Activated CD4-positive, alpha-beta T cell treated with anti-CD3 and anti-CD28 coated beads, Interleukin-2, amount 10 ng/mL, durations not matched to agents 24 days and 14 days (primary cell): ENCODE measurements at regions of chr6 and their contacts with region 1.

Region 1: DNA sequence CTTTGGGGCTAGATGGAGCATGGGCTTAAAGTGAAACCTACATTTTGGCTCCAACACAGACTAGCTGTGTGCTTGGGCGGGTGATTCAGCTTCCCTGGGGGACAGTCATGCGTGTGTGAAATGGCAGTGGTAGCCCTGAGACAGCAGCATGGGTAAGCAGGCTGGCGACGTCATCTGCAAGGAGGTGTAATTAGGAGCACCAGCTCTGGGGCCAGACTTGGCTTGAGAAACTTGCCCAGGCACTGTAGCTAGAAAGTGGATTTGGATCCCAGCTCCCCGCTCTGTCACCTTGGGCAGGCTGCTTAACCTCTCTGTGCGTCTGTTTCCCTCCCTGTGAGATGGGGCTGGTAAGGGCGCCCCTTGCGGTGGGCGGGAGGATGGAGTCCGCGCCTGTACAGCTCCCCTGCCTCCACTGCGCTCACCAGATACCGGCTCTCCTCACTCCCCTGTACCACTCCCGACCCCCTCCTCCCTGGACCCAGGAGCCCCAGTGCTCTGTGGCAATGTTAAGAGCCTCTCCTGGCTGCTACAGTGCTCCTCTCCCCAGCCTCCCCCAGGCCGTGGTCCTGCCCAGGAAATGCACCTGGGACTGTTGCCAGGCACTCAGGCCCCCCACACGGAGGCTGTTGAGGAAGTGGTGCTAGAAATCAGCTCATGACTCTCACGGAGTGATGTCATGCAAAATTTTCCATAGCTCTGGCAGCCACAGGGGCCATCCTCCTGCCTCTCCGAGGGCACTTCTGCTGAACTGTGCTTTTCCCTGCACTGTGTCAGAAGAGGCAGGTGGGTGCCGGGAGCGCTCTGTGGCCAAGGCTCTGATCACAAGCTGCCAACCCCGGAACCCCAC is 44.6 kb downstream of the SYNJ2 start:
- DNase-seq: peak; percentile 92
- H3K4me3 Mint-ChIP-seq: peak overlapping the region; percentile 78
- H3K27ac Mint-ChIP-seq: peak overlapping the region; percentile 100
- H3K4me1 Mint-ChIP-seq: peaks cover 34% of the 10 kb centered on the region
- H3K27me3 Mint-ChIP-seq: no peaks in the 10 kb centered on the region

Region 2: GRCh38 chr6:157756708-157757429 is 269.4 kb before region 1 on chr6:
- intact Hi-C with region 1: no loop called
- DNase-seq: peak; percentile 92
- H3K4me3 Mint-ChIP-seq: peak overlapping the region; percentile 58
- H3K27ac Mint-ChIP-seq: peak overlapping the region; percentile 96
- H3K4me1 Mint-ChIP-seq: peaks cover 82% of the 10 kb centered on the region
- H3K27me3 Mint-ChIP-seq: peaks cover 11% of the 10 kb centered on the region

Region 3: GRCh38 chr6:157941101-157941863 is 85.0 kb before region 1 on chr6:
- intact Hi-C with region 1: loop called (anchors 2 kb)
- DNase-seq: peak; percentile 52
- H3K4me3 Mint-ChIP-seq: no peak overlapping the region
- H3K27ac Mint-ChIP-seq: no peak overlapping the region
- H3K4me1 Mint-ChIP-seq: peaks cover 25% of the 10 kb centered on the region
- H3K27me3 Mint-ChIP-seq: no peaks in the 10 kb centered on the region

Region 4: GRCh38 chr6:157981395-157982296 is 44.6 kb before region 1 on chr6 and contains the start of gene SYNJ2:
- intact Hi-C with region 1: loop called (anchors 1 kb)
- DNase-seq: peak; percentile 96
- H3K4me3 Mint-ChIP-seq: peak within 1 kb of the TSS; percentile 73
- H3K27ac Mint-ChIP-seq: peak within 1 kb of the TSS; percentile 87
- H3K4me1 Mint-ChIP-seq: peaks cover 48% of the 10 kb centered on the region
- H3K27me3 Mint-ChIP-seq: peaks cover 8% of the 10 kb centered on the region
- total RNA-seq, gene SYNJ2: 22.2 and 24.3 TPM in 2 replicates

Region 5: GRCh38 chr6:158047127-158047518 is 20.8 kb after region 1 on chr6:
- intact Hi-C with region 1: loop called (anchors 2 kb)
- DNase-seq: peak; percentile 85
- H3K4me3 Mint-ChIP-seq: peak overlapping the region; percentile 55
- H3K27ac Mint-ChIP-seq: peak overlapping the region; percentile 64
- H3K4me1 Mint-ChIP-seq: peaks cover 34% of the 10 kb centered on the region
- H3K27me3 Mint-ChIP-seq: no peaks in the 10 kb centered on the region

Region 6: DNA sequence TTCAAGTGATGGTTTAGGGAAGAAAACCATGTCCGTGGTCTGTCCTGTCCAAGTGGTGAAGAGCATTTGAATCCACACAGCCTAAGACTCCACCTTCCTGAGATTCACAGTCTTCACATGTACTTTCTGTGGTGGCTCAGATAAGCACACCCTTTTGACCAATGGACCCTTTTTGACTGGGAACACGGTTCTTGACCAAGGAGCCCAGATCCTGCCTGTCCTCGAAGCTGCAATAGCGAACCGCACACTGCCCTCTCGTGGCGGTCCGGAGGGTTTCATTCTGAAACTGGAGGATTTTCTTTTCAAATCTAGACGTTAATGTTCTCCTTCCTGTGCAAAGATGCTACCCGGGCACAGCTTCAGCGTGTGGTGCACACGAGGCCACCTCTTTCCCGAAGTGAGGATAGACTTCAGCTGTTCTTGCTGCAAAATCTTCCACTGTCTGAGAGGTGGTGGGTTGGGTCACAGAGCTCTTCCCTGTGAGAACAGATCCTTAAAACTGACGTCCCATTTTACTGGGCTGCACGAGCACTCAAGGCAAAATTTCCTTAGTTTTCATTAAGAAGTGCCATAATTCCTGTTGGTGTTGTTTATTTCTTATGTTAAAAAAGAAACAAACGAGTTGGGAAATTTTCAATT is 45.9 kb after region 1 on chr6:
- intact Hi-C with region 1: loop called (anchors 1 kb)
- DNase-seq: peak; percentile 90
- H3K4me3 Mint-ChIP-seq: no peak overlapping the region
- H3K27ac Mint-ChIP-seq: peak overlapping the region; percentile 19
- H3K4me1 Mint-ChIP-seq: peaks cover 33% of the 10 kb centered on the region
- H3K27me3 Mint-ChIP-seq: no peaks in the 10 kb centered on the region

Region 7: DNA sequence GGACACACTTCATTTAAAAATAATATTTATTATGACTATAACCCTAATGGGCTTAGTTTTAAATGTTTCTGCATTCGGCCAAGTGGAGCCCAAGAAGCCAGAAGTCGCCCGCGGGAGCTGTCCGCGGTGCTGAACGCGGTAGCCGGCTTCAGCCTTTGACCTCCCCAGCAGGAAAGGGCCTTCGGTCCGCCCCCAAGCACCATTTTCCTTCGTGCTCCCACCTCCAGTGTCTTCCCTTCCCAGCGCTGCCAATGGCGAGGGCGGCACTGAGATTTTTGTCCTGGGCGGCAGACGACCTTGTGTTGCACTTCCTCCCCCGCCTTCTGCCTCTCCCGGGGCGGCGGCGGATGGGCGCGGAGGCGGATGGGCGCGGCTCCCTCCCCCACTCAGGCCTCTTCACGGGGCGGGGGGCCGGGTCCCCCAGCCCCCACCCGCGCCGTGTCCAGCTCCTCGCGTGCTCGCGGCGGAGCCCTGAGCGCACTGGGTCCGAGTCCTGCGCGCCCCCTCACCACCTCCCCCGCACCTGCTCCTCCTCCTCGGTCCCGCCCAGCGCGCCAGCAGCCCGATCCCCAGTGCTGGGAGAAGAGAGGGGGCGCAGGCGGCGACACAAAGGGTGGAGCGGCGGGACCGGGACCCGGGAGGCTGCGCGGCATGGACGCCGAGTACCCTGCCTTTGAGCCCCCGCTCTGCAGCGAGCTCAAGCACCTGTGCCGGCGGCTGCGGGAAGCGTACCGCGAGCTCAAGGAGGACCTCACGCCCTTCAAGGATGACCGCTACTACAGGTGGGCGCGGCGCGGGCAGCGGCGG is 510.0 kb after region 1 on chr6:
- intact Hi-C with region 1: no loop called
- DNase-seq: peak; percentile 94
- H3K4me3 Mint-ChIP-seq: peak overlapping the region; percentile 78
- H3K27ac Mint-ChIP-seq: no peak overlapping the region
- H3K4me1 Mint-ChIP-seq: no peaks in the 10 kb centered on the region
- H3K27me3 Mint-ChIP-seq: peaks cover 52% of the 10 kb centered on the region